PC-3 (cell line): ENCODE measurements at regions of chr1 and their contacts with region 1.

Region 1: GRCh38 chr1:112395821-112396652 is at the start of gene CTTNBP2NL:
- DNase-seq: peak; percentile 96
- ATAC-seq: peak; percentile 83
- H3K4me3 ChIP-seq: peak within 1 kb of the TSS; percentile 92
- H3K27ac ChIP-seq: peak within 1 kb of the TSS; percentile 98
- H3K4me1 ChIP-seq: peaks cover 44% of the 10 kb centered on the region
- H3K27me3 ChIP-seq: no peaks in the 10 kb centered on the region
- CTCF ChIP-seq: no peak
- total RNA-seq, gene CTTNBP2NL: 3.7 and 9.8 TPM in 2 replicates

Region 2: GRCh38 chr1:112444269-112444668 is 48.2 kb after region 1 on chr1:
- CTCF ChIA-PET with region 1: no interaction called
- POLR2A ChIA-PET with region 1: interaction called, 23 read pairs
- intact Hi-C with region 1: no loop called
- DNase-seq: peak; percentile 44
- ATAC-seq: peak; percentile 97
- H3K4me3 ChIP-seq: no peak overlapping the region
- H3K27ac ChIP-seq: peak overlapping the region; percentile 29
- H3K4me1 ChIP-seq: peaks cover 7% of the 10 kb centered on the region
- H3K27me3 ChIP-seq: no peaks in the 10 kb centered on the region
- CTCF ChIP-seq: no peak

Region 3: GRCh38 chr1:112619520-112620376 is 223.7 kb after region 1 on chr1 and contains the start of gene CAPZA1:
- CTCF ChIA-PET with region 1: no interaction called
- POLR2A ChIA-PET with region 1: interaction called, 10 read pairs
- intact Hi-C with region 1: loop called (anchors 1 kb)
- DNase-seq: peak; percentile 90
- ATAC-seq: peak; percentile 85
- H3K4me3 ChIP-seq: peak within 1 kb of the TSS; percentile 90
- H3K27ac ChIP-seq: peak within 1 kb of the TSS; percentile 93
- H3K4me1 ChIP-seq: peaks cover 22% of the 10 kb centered on the region
- H3K27me3 ChIP-seq: no peaks in the 10 kb centered on the region
- CTCF ChIP-seq: no peak
- total RNA-seq, gene CAPZA1: 177 and 273 TPM in 2 replicates

Region 4: GRCh38 chr1:112866151-112866550 is 470.1 kb after region 1 on chr1:
- CTCF ChIA-PET with region 1: no interaction called
- POLR2A ChIA-PET with region 1: no interaction called
- intact Hi-C with region 1: no loop called
- DNase-seq: peak; percentile 93
- ATAC-seq: peak; percentile 93
- H3K4me3 ChIP-seq: no peak overlapping the region
- H3K27ac ChIP-seq: peak overlapping the region; percentile 64
- H3K4me1 ChIP-seq: peaks cover 37% of the 10 kb centered on the region
- H3K27me3 ChIP-seq: no peaks in the 10 kb centered on the region
- CTCF ChIP-seq: no peak